Colonic mucosa (tissue), 4 donors: ENCODE measurements at regions of chr3 and their contacts with region 1.

Region 1: GRCh38 chr3:4963669-4964589 is 15.3 kb upstream of the BHLHE40 start:
- DNase-seq: no peak
- H3K4me3 ChIP-seq: no peak overlapping the region
- H3K27ac ChIP-seq: no peak overlapping the region
- H3K4me1 ChIP-seq: no peaks in the 10 kb centered on the region
- H3K27me3 ChIP-seq: no peaks in the 10 kb centered on the region
- CTCF ChIP-seq: no peak

Region 2: GRCh38 chr3:4797201-4797705 is 166.7 kb before region 1 on chr3:
- intact Hi-C with region 1: no loop called
- DNase-seq: no peak
- H3K4me3 ChIP-seq: no peak overlapping the region
- H3K27ac ChIP-seq: no peak overlapping the region
- H3K4me1 ChIP-seq: no peaks in the 10 kb centered on the region
- H3K27me3 ChIP-seq: no peaks in the 10 kb centered on the region
- CTCF ChIP-seq: no peak

Region 3: GRCh38 chr3:4898454-4899313 is 65.2 kb before region 1 on chr3:
- intact Hi-C with region 1: loop called (anchors 10 kb)
- DNase-seq: no peak
- H3K4me3 ChIP-seq: no peak overlapping the region
- H3K27ac ChIP-seq: no peak overlapping the region
- H3K4me1 ChIP-seq: no peaks in the 10 kb centered on the region
- H3K27me3 ChIP-seq: no peaks in the 10 kb centered on the region
- CTCF ChIP-seq: no peak

Region 4: DNA sequence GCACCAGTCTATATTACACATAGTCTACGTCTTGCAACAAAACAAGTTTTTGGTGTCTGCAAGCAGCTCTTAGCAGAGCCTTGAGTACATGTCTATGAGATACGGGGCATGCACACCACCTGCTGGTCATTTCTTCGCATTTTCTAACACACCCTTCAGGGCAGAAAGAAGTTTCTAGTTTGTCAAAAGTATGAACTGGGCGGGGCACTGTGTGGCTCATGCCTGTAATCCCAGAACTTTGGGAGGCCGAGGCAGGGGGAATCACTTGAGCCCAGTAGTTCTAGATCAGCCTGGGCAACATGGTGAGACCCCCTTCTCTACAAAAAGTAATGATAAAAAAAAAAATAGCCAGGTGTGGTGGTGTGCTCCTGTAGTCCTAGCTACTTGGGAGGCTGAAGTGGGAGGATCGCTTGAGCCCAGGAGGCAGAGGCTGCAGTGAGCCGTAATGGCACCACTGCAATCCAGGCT is 94.0 kb after region 1 on chr3:
- intact Hi-C with region 1: no loop called
- DNase-seq: peak; percentile 86
- H3K4me3 ChIP-seq: no peak overlapping the region
- H3K27ac ChIP-seq: no peak overlapping the region
- H3K4me1 ChIP-seq: no peaks in the 10 kb centered on the region
- H3K27me3 ChIP-seq: no peaks in the 10 kb centered on the region
- CTCF ChIP-seq: peak; percentile 64